PC-3 (cell line): ENCODE measurements at regions of chr9 and their contacts with region 1.

Region 1: DNA sequence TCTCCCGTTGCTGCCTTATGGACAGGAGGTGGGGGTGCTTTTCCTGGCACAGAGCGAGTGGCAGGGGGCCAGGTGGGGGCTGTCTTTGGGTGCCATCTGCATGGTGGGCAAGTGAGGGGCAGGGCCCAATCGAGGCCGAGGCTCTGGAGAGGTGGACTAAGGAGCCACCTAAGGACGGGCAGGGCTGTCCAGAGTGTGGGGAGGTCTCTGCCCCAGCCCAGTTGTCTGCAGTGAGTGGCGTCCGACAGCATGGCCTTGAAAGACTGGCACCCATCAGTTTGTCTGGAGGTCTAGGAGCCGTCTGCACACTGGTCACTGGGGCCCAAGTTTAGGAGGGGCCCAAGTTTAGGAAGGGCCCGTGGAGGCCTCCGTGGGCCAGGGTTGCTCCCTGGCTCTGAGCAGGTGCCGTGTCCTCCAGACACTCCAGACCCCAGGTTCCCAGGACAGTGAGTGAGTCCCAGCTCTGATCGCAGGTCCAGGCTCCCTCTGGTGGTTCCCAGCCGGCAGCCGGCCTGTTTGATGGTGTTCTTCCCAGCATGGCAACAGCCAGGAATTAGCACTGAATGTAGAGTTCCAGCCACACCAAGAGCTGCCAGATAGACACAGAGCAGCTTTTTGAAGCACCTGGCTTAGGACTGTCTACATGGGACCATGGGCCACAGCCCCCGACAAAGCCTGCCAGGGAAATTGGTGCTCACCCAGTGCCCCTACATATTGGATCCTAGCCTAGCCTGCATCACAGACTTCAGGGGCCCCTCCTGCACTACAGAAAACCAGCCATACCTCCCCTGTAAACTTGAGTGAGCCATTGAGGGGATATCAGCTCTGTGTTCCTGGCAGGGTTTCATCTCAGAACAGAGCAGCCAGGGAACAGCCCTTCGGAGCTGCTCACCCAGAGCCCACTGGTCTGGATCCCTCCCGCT is 120.9 kb downstream of the WNK2 start:
- DNase-seq: peak; percentile 50
- ATAC-seq: peak; percentile 84
- H3K4me3 ChIP-seq: no peak overlapping the region
- H3K27ac ChIP-seq: no peak overlapping the region
- H3K4me1 ChIP-seq: no peaks in the 10 kb centered on the region
- H3K27me3 ChIP-seq: no peaks in the 10 kb centered on the region
- CTCF ChIP-seq: peak; percentile 67

Region 2: DNA sequence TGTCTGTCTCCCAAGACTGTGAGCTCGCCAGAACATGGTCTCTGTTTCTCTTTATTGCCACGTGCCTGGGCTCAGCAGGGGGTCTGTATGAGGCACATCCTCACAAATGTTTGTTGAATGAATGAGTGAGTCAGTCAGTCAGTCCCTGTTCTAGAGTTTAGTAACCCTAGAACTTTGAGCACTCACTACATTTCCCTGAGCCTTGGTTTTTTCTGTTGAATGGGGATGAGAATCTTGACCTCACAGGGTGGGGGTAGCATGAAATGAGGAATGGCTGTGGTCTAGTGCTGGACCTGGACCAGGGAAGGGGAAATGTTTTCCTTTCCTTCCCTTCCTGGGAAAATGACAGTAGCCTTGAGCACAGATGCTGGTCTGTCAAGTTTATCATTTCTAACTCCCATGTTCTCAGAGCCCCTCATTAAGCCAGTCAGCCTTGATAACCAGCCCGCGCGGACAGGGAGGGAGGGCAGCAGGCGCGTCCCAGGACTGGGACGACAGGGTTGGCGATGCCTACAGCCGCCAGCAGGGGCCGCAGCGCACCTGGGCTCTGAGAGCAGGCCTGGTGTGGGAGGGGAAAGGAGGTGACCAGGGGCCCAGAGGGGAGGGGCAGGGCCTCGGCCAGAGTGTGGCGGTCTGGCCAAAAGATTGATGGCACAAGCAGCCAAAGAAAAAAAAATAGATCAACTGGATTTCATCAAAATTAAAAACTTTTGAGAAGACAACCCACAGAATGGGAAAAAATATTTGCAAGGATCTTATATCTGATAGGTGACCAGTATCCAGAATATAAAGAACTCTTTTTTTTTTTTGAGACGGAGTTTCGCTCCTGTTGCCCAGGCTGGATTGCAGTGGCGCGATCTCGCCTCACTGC is 145.0 kb before region 1 on chr9:
- CTCF ChIA-PET with region 1: interaction called, 6 read pairs
- POLR2A ChIA-PET with region 1: no interaction called
- intact Hi-C with region 1: loop called (anchors 1 kb)
- DNase-seq: peak; percentile 84
- ATAC-seq: peak; percentile 99
- H3K4me3 ChIP-seq: peak overlapping the region; percentile 51
- H3K27ac ChIP-seq: no peak overlapping the region
- H3K4me1 ChIP-seq: peaks cover 6% of the 10 kb centered on the region
- H3K27me3 ChIP-seq: no peaks in the 10 kb centered on the region
- CTCF ChIP-seq: peak; percentile 94